Activated CD8-positive, alpha-beta T cell treated with anti-CD3 and anti-CD28 coated beads for 36 hours (primary cell): ENCODE measurements at regions of chr17 and their contacts with region 1.

Region 1: GRCh38 chr17:28763804-28764266 is 20.0 kb downstream of the TRAF4 start:
- DNase-seq: peak; percentile 93
- ATAC-seq: peak; percentile 88
- H3K4me3 Mint-ChIP-seq: no peak overlapping the region
- H3K27ac Mint-ChIP-seq: no peak overlapping the region
- H3K4me1 Mint-ChIP-seq: peaks cover 16% of the 10 kb centered on the region
- H3K27me3 Mint-ChIP-seq: no peaks in the 10 kb centered on the region
- CTCF ChIP-seq: peak; percentile 97

Region 2: GRCh38 chr17:28743225-28744103 is 20.4 kb before region 1 on chr17 and contains the start of gene TRAF4:
- CTCF ChIA-PET with region 1: interaction called, 109 read pairs
- POLR2A ChIA-PET with region 1: interaction called, 5 read pairs
- intact Hi-C with region 1: no loop called
- DNase-seq: peak; percentile 90
- ATAC-seq: peak; percentile 87
- H3K4me3 Mint-ChIP-seq: peak within 1 kb of the TSS; percentile 91
- H3K27ac Mint-ChIP-seq: peak within 1 kb of the TSS; percentile 90
- H3K4me1 Mint-ChIP-seq: peaks cover 43% of the 10 kb centered on the region
- H3K27me3 Mint-ChIP-seq: no peaks in the 10 kb centered on the region
- CTCF ChIP-seq: no peak
- total RNA-seq, gene TRAF4: 140 to 151 TPM

Region 3: DNA sequence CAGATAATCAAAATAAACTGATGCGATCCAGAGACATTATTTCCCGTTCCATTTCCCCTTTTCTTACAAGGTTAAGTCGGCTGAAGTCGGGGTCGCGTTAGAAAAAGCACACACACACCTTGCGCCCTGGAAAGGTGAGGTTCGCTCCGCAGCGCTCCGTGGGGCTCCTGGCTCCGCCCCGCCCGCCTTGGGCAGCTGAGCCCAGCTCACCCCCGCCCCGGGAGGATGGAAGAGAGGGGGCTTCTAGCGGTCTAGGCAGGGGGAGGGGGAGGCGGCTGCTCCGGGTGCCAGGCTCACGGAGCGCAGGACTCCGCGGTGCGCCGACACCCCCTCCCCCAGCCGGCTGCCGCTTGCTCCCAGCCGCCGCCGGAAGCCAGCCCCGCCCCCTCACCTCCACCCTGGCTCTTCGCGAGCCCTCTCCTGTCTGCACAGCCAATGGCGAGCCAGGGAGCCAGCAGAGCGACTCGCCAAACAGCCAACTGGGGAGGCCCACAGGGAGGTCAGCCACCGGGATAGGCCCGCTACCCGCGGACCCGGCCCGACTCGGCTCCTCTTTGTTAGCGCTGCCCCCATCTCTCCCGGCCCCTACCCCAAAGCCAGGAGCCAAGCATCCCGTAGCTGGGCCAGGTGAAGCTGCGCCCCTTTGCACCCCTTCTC is 48.4 kb after region 1 on chr17:
- CTCF ChIA-PET with region 1: interaction called, 59 read pairs
- POLR2A ChIA-PET with region 1: interaction called, 3 read pairs
- intact Hi-C with region 1: no loop called
- DNase-seq: peak; percentile 98
- ATAC-seq: peak; percentile 100
- H3K4me3 Mint-ChIP-seq: peak overlapping the region; percentile 90
- H3K27ac Mint-ChIP-seq: peak overlapping the region; percentile 91
- H3K4me1 Mint-ChIP-seq: peaks cover 43% of the 10 kb centered on the region
- H3K27me3 Mint-ChIP-seq: no peaks in the 10 kb centered on the region
- CTCF ChIP-seq: no peak

Region 4: GRCh38 chr17:28849281-28849680 is 85.4 kb after region 1 on chr17:
- CTCF ChIA-PET with region 1: interaction called, 58 read pairs
- POLR2A ChIA-PET with region 1: no interaction called
- intact Hi-C with region 1: no loop called
- DNase-seq: peak; percentile 60
- ATAC-seq: peak; percentile 75
- H3K4me3 Mint-ChIP-seq: no peak overlapping the region
- H3K27ac Mint-ChIP-seq: peak overlapping the region; percentile 24
- H3K4me1 Mint-ChIP-seq: peaks cover 9% of the 10 kb centered on the region
- H3K27me3 Mint-ChIP-seq: no peaks in the 10 kb centered on the region
- CTCF ChIP-seq: no peak

Region 5: GRCh38 chr17:28896884-28897768 is 133.3 kb after region 1 on chr17 and contains the start of gene FLOT2:
- CTCF ChIA-PET with region 1: interaction called, 22 read pairs
- POLR2A ChIA-PET with region 1: interaction called, 12 read pairs
- intact Hi-C with region 1: no loop called
- DNase-seq: peak; percentile 83
- ATAC-seq: peak; percentile 66
- H3K4me3 Mint-ChIP-seq: peak within 1 kb of the TSS; percentile 94
- H3K27ac Mint-ChIP-seq: peak within 1 kb of the TSS; percentile 93
- H3K4me1 Mint-ChIP-seq: peaks cover 64% of the 10 kb centered on the region
- H3K27me3 Mint-ChIP-seq: no peaks in the 10 kb centered on the region
- CTCF ChIP-seq: peak; percentile 38
- total RNA-seq, gene FLOT2: 59.7 to 60.1 TPM

Region 6: GRCh38 chr17:28925912-28926365 is 162.1 kb after region 1 on chr17:
- CTCF ChIA-PET with region 1: interaction called, 20 read pairs
- POLR2A ChIA-PET with region 1: no interaction called
- intact Hi-C with region 1: no loop called
- DNase-seq: peak; percentile 59
- ATAC-seq: peak; percentile 85
- H3K4me3 Mint-ChIP-seq: peak overlapping the region; percentile 31
- H3K27ac Mint-ChIP-seq: peak overlapping the region; percentile 82
- H3K4me1 Mint-ChIP-seq: peaks cover 59% of the 10 kb centered on the region
- H3K27me3 Mint-ChIP-seq: no peaks in the 10 kb centered on the region
- CTCF ChIP-seq: no peak